ENCODE measurements at regions of chr10 and their contacts with region 1.

Region 1: DNA sequence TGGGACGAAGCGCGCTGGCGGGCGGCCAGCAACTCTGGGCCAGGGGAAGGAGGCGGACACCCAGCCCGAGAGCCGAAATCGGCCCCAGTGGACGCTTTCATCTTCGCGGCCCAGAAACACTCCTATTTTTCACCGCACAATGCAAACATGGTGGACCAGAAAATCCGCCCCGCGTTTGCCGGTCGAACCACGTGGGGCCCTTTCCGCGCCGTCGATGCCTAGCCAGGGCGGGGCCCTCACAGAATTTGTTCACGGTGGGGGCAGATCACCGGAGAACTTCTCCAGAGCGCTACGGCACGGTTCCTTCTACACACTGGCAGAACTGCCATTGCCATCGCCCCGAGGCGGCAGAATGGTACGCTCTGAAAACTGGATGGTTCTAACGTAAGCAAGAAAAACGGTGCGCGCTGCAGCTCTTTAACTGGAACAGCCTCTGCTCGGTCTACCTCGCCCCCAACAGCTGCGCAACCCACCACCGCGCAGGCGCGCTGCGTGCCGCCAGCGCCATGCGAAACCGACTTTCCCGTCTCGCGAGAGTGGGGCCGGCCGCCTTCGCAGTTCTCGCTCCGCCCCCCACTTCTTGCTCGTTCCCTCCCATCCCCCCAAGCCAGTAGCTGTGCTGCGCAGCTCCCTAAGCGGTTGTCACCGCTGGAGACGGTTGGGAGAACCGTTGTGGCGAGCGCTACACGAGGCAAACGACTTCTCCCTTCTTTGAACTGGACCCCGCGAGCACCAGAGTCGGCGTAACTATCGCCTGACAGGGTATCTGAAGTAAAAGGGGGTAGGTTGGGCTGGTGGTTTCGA is at the start of gene HNRNPH3:
- DNase-seq: peak; percentile 97 to 99
- H3K4me3 ChIP-seq: peak within 1 kb of the TSS; percentile 95 to 99 (median 98)
- H3K27ac ChIP-seq: peak within 1 kb of the TSS; percentile 99
- H3K4me1 ChIP-seq: peaks cover 0 to 5% (median 4%) of the 10 kb centered on the region in 4 experiments; a peak in 4 of 7 replicates
- H3K27me3 ChIP-seq: no peaks in the 10 kb centered on the region; a peak in 1 of 7 replicates
- CTCF ChIP-seq: no peak
- EP300 ChIP-seq: no peak
- POLR2A ChIP-seq: peak; percentile 98 to 100
- RAD21 ChIP-seq: 0 out of 4 replicates have a peak, but pooled peaks of 1 of the 2 experiments have one; percentile 0
- total RNA-seq, gene HNRNPH3: 229 and 230 TPM in 2 replicates

Region 2: DNA sequence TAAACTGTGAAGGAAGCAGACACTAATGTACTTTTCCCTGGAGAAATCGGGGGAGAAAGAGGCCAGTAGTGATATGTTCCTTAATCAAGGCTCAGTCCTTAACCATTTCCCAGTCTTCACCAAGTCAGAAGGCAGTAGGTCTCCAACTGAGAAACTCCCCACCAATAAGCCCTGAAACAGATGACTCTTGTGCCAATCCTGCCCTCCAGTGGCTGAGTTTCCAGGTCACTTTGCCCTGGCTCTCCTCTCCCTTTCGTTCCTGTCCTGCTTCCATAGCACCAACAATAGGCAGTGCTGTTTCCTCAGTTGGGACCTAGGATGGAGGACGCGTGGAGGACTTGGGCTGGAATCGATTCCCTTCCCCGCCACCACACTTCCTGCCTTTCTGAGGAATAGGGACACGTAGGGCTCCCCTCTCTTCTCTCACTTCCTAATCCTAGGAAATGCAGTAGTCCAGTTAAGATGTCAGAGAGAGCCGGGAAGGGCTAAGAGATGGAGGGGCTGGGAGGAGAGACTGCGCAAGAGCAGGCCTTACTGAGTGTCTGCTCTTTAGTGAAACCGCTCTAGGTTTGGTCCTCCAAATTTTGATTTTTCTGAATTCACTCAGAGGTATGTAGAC is 123.1 kb before region 1 on chr10:
- CTCF ChIA-PET with region 1: interaction called, 4 read pairs
- POLR2A ChIA-PET with region 1: interaction called, 14 read pairs
- DNase-seq: peak; percentile 79 to 87
- H3K4me3 ChIP-seq: no peak overlapping the region
- H3K27ac ChIP-seq: no peak overlapping the region
- H3K4me1 ChIP-seq: no peaks in the 10 kb centered on the region; a peak in 2 of 7 replicates
- H3K27me3 ChIP-seq: no peaks in the 10 kb centered on the region
- CTCF ChIP-seq: peak; percentile 79 to 93 (median 86)
- EP300 ChIP-seq: no peak
- POLR2A ChIP-seq: no peak
- RAD21 ChIP-seq: peak; percentile 99

Region 3: DNA sequence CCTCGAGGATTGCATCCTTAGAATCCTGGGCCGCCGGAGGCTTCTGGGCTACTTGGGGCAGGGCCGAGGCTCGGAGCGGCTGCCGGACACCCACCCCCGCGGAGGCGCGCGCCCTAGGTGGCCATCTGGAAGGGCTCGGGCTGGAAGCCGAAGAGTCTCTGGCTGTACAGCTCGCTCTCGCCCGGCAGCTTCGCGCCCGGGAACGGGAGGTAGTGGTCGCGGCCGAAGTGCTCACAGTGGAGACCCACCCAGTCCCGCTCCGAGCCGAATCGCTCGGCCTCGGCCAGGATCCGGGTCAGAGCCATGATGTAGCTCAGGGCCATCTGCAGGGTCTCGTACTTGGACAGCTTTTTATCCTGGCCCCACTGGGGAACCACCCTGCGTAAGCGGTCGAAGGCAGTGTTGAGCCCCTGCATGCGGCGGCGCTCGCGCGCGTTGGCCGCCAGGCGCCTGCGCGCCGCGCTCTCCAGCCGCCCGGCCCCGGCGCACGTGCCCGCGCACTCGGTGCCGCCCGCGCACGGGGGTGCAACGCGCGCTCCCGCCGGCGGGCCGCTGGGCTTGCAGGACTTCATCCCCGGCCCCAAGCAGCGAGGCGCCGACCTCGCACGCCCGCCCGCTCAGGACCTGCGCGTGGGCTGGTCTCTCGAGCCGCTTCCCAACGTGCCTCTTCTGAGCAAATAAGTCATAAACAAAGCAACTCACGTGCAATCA is 100.4 kb before region 1 on chr10:
- CTCF ChIA-PET with region 1: interaction called, 3 read pairs
- POLR2A ChIA-PET with region 1: interaction called, 64 read pairs
- DNase-seq: peak; percentile 38 to 88
- H3K4me3 ChIP-seq: peak overlapping the region; percentile 54 to 74 (median 68)
- H3K27ac ChIP-seq: no peak overlapping the region; the same call in 1 of the 2 replicates
- H3K4me1 ChIP-seq: peaks cover 0 to 5% (median 0%) of the 10 kb centered on the region in 4 experiments; a peak in 3 of 7 replicates
- H3K27me3 ChIP-seq: peaks cover 0 to 5% (median 3%) of the 10 kb centered on the region in 4 experiments; a peak in 4 of 7 replicates
- CTCF ChIP-seq: peak; percentile 33 to 46 (median 46)
- EP300 ChIP-seq: no peak
- POLR2A ChIP-seq: peak; percentile 29 to 74
- RAD21 ChIP-seq: peak in 1 of 2 experiments; percentile 8; a peak in 1 of 4 replicates

Region 4: GRCh38 chr10:68269562-68270290 is 61.9 kb before region 1 on chr10:
- CTCF ChIA-PET with region 1: no interaction called
- POLR2A ChIA-PET with region 1: no interaction called
- DNase-seq: no peak
- H3K4me3 ChIP-seq: no peak overlapping the region
- H3K27ac ChIP-seq: no peak overlapping the region
- H3K4me1 ChIP-seq: peaks cover 0 to 2% (median 0%) of the 10 kb centered on the region in 4 experiments; a peak in 2 of 7 replicates
- H3K27me3 ChIP-seq: 0 out of 7 replicates have a peak, but pooled peaks cover 0 to 4% (median 0%) of the 10 kb centered on the region in 4 experiments
- CTCF ChIP-seq: no peak
- EP300 ChIP-seq: no peak
- POLR2A ChIP-seq: no peak
- RAD21 ChIP-seq: no peak

Region 5: DNA sequence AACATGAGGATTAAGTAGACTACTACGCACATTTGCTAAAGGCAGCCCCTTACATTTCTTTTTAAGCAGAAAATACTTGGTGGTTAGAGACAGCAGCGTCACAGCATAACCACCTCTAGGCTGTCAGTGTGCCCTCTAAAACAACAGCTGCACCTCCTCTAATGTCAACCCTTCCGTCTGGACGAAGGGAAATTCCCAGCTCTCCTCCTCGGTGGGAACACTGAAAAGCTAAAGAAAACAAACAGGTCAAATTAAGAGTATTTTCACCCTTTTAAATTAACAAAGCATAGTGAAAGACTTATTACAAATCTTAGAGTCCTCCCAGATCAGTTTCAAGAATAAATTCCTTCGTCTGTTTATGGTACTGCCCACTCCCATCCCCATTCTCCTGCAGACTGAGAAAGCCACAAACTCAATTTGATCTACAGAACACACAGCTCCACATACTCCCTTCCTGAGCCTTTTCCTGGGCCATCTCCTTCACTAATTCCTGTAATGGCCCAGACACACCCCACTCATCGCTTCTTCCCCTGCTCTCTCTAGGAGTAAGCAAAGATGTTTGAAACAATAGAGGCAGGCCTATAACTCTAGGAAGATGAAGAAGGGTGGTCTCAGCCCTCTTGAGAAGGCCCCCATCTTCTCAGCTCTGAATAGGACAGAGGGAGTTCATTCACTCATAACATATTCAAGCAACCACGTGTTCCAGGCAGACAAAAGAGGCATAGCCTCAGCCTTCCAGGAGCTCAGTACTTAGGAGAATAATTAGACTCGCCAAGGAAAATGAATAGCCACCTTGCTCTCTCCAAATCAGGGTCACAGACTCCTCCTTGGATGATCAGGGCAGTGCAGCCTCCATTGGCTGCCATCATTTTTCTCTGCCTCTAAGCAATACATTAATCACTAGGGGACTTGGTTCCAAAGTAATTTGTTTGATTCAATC is 47.3 kb before region 1 on chr10:
- CTCF ChIA-PET with region 1: no interaction called
- POLR2A ChIA-PET with region 1: interaction called, 11 read pairs
- DNase-seq: no peak
- H3K4me3 ChIP-seq: no peak overlapping the region
- H3K27ac ChIP-seq: no peak overlapping the region
- H3K4me1 ChIP-seq: no peaks in the 10 kb centered on the region
- H3K27me3 ChIP-seq: no peaks in the 10 kb centered on the region
- CTCF ChIP-seq: no peak
- EP300 ChIP-seq: no peak
- POLR2A ChIP-seq: no peak
- RAD21 ChIP-seq: no peak

Region 6: DNA sequence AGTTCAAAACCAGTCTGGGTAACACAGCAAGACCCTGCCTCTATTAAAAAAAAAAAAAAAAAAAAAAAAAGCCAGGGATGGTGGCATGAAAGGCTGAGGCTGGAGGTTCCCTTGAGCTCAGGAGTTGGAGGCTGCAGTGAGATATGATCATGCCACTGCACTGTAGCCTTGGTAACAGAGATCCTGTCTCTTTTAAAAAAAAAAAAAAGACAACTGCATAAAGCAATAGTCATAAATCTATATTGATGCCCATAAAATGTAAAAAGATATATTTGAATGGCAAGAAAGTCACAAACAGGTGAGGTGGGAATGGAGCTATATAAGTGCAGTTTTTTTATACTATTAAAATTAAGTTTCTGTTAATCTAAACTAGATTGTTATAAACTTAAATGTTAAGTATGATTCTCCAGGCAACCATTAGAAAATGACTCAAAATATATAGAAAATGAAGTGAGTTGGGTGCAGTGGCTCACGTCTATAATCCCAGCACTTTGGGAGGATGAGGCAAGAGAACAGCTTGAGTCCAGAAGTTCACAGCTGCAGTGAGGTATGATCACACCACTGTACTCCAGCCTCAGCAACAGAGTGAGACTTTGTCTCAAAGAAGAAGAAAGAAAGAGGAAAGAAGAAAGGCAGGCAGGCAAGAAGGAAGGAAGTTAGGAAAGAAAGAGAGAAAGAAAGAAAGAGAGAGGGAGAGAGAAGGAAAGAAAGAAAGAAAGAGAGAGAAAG is 13.2 kb before region 1 on chr10:
- CTCF ChIA-PET with region 1: interaction called, 5 read pairs
- POLR2A ChIA-PET with region 1: interaction called, 38 read pairs
- DNase-seq: no peak
- H3K4me3 ChIP-seq: no peak overlapping the region
- H3K27ac ChIP-seq: no peak overlapping the region
- H3K4me1 ChIP-seq: no peaks in the 10 kb centered on the region
- H3K27me3 ChIP-seq: no peaks in the 10 kb centered on the region
- CTCF ChIP-seq: no peak
- EP300 ChIP-seq: no peak
- POLR2A ChIP-seq: no peak
- RAD21 ChIP-seq: no peak

Region 7: GRCh38 chr10:68364101-68364886 is 32.6 kb after region 1 on chr10:
- CTCF ChIA-PET with region 1: no interaction called
- POLR2A ChIA-PET with region 1: interaction called, 17 read pairs
- DNase-seq: no peak
- H3K4me3 ChIP-seq: no peak overlapping the region
- H3K27ac ChIP-seq: no peak overlapping the region
- H3K4me1 ChIP-seq: no peaks in the 10 kb centered on the region
- H3K27me3 ChIP-seq: no peaks in the 10 kb centered on the region
- CTCF ChIP-seq: no peak
- EP300 ChIP-seq: no peak
- POLR2A ChIP-seq: no peak
- RAD21 ChIP-seq: no peak